ENCODE measurements at regions of chr16 and their contacts with region 1.

Region 1: DNA sequence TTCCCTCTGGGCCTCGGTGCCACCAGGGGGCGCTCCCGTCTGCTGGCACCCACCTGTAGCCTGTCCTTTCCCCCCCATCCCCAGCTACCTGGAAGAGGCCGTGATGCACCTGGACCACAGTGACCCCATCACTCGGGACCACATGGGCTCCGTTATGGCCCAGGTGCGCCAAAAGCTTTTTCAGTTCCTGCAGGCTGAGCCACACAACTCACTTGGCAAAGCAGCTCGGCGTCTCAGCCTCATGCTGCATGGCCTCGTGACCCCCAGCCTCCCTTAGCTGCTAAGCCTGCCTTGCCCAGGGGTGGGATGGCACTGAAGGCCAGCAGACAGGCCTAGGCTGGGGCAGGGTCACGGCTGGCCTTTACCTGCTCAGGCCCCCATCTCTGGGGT is 818 bp upstream of the NRN1L start:
- DNase-seq: peak in 1 of 2 donors; percentile 73
- H3K4me3 ChIP-seq: peak overlapping the region in 1 of 2 donors; percentile 45
- H3K27ac ChIP-seq: peak overlapping the region; percentile 67 to 75
- H3K4me1 ChIP-seq: peaks cover 6 to 13% of the 10 kb centered on the region in 2 donors
- H3K27me3 ChIP-seq: no peaks in the 10 kb centered on the region
- CTCF ChIP-seq: peak; percentile 77 to 94 (median 79)

Region 2: DNA sequence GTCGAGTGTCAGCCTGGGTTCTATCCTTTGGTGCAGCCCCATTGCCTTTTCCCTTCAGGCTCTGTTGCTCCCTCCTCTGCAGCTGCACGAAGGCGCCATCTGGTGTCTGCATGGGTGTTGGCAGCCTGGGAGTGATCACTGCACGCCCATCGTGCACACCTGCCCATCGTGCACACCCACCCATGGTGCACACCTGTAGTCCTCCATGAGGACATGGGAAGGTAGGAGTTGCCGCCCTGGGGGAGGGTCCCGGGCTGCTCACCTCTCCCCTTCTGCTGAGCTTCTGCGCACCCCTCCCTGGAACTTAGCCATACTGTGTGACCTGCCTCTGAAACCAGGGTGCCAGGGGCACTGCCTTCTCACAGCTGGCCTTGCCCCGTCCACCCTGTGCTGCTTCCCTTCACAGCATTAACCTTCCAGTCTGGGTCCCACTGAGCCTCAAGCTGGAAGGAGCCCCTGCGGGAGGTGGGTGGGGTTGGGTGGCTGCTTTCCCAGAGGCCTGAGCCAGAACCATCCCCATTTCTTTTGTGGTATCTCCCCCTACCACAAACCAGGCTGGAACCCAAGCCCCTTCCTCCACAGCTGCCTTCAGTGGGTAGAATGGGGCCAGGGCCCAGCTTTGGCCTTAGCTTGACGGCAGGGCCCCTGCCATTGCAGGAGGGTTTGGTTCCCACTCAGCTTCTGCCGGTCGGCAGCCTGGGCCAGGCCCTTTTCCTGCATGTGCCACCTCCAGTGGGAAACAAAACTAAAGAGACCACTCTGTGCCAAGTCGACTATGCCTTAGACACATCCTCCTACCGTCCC is 44.9 kb after region 1 on chr16:
- intact Hi-C with region 1: loop called (anchors 1 kb)
- DNase-seq: peak in 1 of 2 donors; percentile 82
- H3K4me3 ChIP-seq: no peak overlapping the region
- H3K27ac ChIP-seq: no peak overlapping the region
- H3K4me1 ChIP-seq: peaks cover 10% of the 10 kb centered on the region in 2 donors
- H3K27me3 ChIP-seq: no peaks in the 10 kb centered on the region
- CTCF ChIP-seq: peak; percentile 68 to 90 (median 88)

Region 3: GRCh38 chr16:68040507-68041288 is 156.8 kb after region 1 on chr16:
- intact Hi-C with region 1: loop called (anchors 5 kb)
- DNase-seq: peak in 1 of 2 donors; percentile 88
- H3K4me3 ChIP-seq: no peak overlapping the region
- H3K27ac ChIP-seq: no peak overlapping the region
- H3K4me1 ChIP-seq: no peaks in the 10 kb centered on the region
- H3K27me3 ChIP-seq: no peaks in the 10 kb centered on the region
- CTCF ChIP-seq: peak; percentile 76 to 87 (median 87)

Measured in ascending aorta (tissue), 2 donors.